CD4-positive, alpha-beta T cell (primary cell): ENCODE measurements at regions of chr1 and their contacts with region 1.

Region 1: GRCh38 chr1:92485381-92486257 is 1.1 kb downstream of the GFI1 start:
- DNase-seq: peak; percentile 62 to 89 (median 78)
- ATAC-seq: peak; percentile 66
- H3K4me3 ChIP-seq: peak overlapping the region; percentile 89
- H3K4me3 Mint-ChIP-seq: peak overlapping the region; percentile 96
- H3K27ac ChIP-seq: peak overlapping the region in 1 of 2 donors; percentile 65
- H3K27ac Mint-ChIP-seq: peak overlapping the region; percentile 87
- H3K4me1 ChIP-seq: peaks cover 46% of the 10 kb centered on the region
- H3K4me1 Mint-ChIP-seq: peaks cover 56% of the 10 kb centered on the region
- H3K27me3 ChIP-seq: no peaks in the 10 kb centered on the region
- H3K27me3 Mint-ChIP-seq: no peaks in the 10 kb centered on the region
- CTCF ChIP-seq: peak; percentile 62

Region 2: GRCh38 chr1:92317836-92318493 is 167.7 kb before region 1 on chr1:
- CTCF ChIA-PET with region 1: interaction called, 6 read pairs
- POLR2A ChIA-PET with region 1: interaction called, 76 read pairs
- intact Hi-C with region 1: loop called (anchors 5 kb)
- DNase-seq: peak in 4 of 14 experiments; percentile 11 to 72 (median 60)
- ATAC-seq: peak; percentile 39
- H3K4me3 ChIP-seq: no peak overlapping the region
- H3K4me3 Mint-ChIP-seq: peak overlapping the region; percentile 30
- H3K27ac ChIP-seq: peak overlapping the region in 1 of 2 donors; percentile 40
- H3K27ac Mint-ChIP-seq: peak overlapping the region; percentile 85
- H3K4me1 ChIP-seq: peaks cover 38% of the 10 kb centered on the region
- H3K4me1 Mint-ChIP-seq: peaks cover 59% of the 10 kb centered on the region
- H3K27me3 ChIP-seq: no peaks in the 10 kb centered on the region
- H3K27me3 Mint-ChIP-seq: no peaks in the 10 kb centered on the region
- CTCF ChIP-seq: no peak

Region 3: GRCh38 chr1:92464588-92465255 is 20.9 kb before region 1 on chr1:
- CTCF ChIA-PET with region 1: interaction called, 6 read pairs
- POLR2A ChIA-PET with region 1: interaction called, 14 read pairs
- intact Hi-C with region 1: no loop called
- DNase-seq: peak in 1 of 14 experiments; percentile 45
- ATAC-seq: no peak
- H3K4me3 ChIP-seq: no peak overlapping the region
- H3K4me3 Mint-ChIP-seq: peak overlapping the region; percentile 27
- H3K27ac ChIP-seq: no peak overlapping the region
- H3K27ac Mint-ChIP-seq: peak overlapping the region; percentile 23
- H3K4me1 ChIP-seq: peaks cover 36% of the 10 kb centered on the region
- H3K4me1 Mint-ChIP-seq: peaks cover 65% of the 10 kb centered on the region
- H3K27me3 ChIP-seq: no peaks in the 10 kb centered on the region
- H3K27me3 Mint-ChIP-seq: no peaks in the 10 kb centered on the region
- CTCF ChIP-seq: no peak

Region 4: GRCh38 chr1:92544756-92545165 is 59.1 kb after region 1 on chr1:
- CTCF ChIA-PET with region 1: interaction called, 3 read pairs
- POLR2A ChIA-PET with region 1: interaction called, 11 read pairs
- intact Hi-C with region 1: loop called in 1 of 2 experiments (anchors 5 kb)
- DNase-seq: peak in 1 of 14 experiments; percentile 10
- ATAC-seq: no peak
- H3K4me3 ChIP-seq: no peak overlapping the region
- H3K4me3 Mint-ChIP-seq: no peak overlapping the region
- H3K27ac ChIP-seq: no peak overlapping the region
- H3K27ac Mint-ChIP-seq: no peak overlapping the region
- H3K4me1 ChIP-seq: no peaks in the 10 kb centered on the region
- H3K4me1 Mint-ChIP-seq: peaks cover 20% of the 10 kb centered on the region
- H3K27me3 ChIP-seq: no peaks in the 10 kb centered on the region
- H3K27me3 Mint-ChIP-seq: no peaks in the 10 kb centered on the region
- CTCF ChIP-seq: no peak

Region 5: DNA sequence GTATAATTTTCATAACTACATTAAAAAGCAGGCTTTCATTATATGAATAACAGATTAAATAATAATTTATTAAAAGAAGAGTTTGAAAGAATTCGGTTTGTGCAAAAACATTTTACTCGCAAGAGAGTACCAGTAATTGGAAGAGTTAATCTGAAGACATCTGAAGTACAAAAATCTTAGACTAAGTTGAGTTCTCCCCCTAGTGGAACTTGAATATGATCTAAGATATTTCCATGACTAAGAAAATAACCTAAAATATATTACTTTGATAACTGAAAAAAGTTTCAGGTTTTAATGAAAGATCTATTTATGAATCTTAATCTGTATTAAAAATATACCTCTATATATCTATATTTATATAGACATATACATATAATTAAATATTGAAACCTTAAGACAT is 113.6 kb after region 1 on chr1:
- CTCF ChIA-PET with region 1: interaction called, 5 read pairs
- POLR2A ChIA-PET with region 1: interaction called, 14 read pairs
- intact Hi-C with region 1: loop called (anchors 2 to 5 kb)
- DNase-seq: peak in 3 of 14 experiments; percentile 63 to 65 (median 63)
- ATAC-seq: peak; percentile 46
- H3K4me3 ChIP-seq: no peak overlapping the region
- H3K4me3 Mint-ChIP-seq: no peak overlapping the region
- H3K27ac ChIP-seq: no peak overlapping the region
- H3K27ac Mint-ChIP-seq: no peak overlapping the region
- H3K4me1 ChIP-seq: no peaks in the 10 kb centered on the region
- H3K4me1 Mint-ChIP-seq: peaks cover 5% of the 10 kb centered on the region
- H3K27me3 ChIP-seq: no peaks in the 10 kb centered on the region
- H3K27me3 Mint-ChIP-seq: no peaks in the 10 kb centered on the region
- CTCF ChIP-seq: peak; percentile 76